ENCODE measurements at regions of chr17 and their contacts with region 1.

Region 1: DNA sequence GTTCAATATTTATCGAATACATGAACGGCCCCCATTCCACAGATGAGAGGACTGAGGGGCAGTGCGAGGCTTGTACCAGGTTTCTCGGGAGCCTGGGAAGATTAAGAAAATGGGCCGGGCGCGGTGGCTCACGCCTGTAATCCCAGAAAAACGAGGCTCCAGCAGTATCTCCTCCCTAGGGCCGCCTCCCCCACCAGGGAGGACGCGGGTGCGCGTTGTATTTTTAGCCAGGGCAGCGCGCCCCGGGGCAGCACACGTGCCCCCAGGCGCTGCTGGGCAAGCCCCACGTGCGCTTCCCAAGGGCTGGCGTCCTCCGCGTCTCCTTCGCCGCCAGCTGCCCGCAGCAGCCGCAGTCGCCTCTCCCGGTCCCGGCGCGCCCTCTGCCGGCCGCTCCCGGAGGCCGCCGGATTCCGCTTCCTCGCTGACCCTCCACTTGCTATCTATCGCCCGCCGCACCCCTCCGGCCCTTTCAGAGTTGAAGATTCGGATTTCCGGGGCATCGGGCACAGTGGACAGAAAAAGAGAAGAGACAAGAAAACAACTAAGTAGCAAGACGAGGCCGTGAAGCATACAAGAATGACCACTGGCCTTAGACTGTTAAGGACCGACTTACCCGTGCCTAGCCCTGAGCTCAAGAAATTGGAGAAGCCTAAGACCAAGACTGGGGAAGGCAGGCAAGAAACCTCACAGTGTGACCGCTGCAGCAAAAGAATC is 1.9 kb upstream of the YBX2 start:
- DNase-seq: peak; percentile 71
- H3K4me3 Mint-ChIP-seq: no peak overlapping the region
- H3K27ac Mint-ChIP-seq: peak overlapping the region; percentile 52
- H3K4me1 Mint-ChIP-seq: peaks cover 28% of the 10 kb centered on the region
- H3K27me3 Mint-ChIP-seq: peaks cover 91% of the 10 kb centered on the region

Region 2: DNA sequence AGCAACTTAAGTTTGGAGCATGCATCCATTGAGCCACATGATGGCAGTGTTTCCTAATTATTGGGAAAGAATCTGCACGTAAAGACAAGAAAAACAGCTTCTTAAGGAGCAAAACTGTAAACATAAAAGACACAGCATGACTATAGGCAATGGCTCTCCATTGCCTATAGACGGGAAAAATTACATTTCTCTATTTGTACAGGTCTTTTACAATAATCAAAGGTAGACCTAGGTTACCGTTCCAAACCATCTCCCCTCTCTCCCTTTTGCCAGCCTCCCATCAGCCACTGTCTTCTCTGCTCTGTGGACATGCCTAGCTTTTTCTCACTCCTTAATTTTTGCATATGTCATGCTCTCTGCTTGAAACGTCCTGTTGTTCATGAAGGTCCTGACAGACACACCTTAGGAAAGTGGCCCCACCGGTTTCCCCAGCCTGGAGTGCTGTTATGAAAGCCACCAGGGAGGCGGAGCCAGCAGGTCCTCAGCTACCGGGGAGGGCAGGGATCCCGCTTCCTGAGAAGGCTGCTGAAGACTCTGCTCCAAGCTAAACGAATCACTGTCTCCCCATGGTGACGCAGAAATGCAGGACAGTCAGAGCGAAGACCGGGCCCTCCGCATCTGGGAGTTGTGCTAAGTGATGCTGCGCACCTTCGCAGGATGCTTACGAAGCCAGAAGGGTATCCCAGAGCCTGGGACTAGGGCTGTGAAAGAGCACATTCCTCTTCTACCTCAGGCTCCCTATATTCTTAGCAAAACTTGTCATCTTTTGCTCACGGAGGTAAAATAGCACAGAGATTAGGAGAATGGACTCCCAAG is 250.2 kb before region 1 on chr17:
- CTCF ChIA-PET with region 1: interaction called, 12 read pairs
- DNase-seq: peak; percentile 64
- H3K4me3 Mint-ChIP-seq: peak overlapping the region; percentile 65
- H3K27ac Mint-ChIP-seq: peak overlapping the region; percentile 71
- H3K4me1 Mint-ChIP-seq: peaks cover 42% of the 10 kb centered on the region
- H3K27me3 Mint-ChIP-seq: peaks cover 60% of the 10 kb centered on the region

Region 3: DNA sequence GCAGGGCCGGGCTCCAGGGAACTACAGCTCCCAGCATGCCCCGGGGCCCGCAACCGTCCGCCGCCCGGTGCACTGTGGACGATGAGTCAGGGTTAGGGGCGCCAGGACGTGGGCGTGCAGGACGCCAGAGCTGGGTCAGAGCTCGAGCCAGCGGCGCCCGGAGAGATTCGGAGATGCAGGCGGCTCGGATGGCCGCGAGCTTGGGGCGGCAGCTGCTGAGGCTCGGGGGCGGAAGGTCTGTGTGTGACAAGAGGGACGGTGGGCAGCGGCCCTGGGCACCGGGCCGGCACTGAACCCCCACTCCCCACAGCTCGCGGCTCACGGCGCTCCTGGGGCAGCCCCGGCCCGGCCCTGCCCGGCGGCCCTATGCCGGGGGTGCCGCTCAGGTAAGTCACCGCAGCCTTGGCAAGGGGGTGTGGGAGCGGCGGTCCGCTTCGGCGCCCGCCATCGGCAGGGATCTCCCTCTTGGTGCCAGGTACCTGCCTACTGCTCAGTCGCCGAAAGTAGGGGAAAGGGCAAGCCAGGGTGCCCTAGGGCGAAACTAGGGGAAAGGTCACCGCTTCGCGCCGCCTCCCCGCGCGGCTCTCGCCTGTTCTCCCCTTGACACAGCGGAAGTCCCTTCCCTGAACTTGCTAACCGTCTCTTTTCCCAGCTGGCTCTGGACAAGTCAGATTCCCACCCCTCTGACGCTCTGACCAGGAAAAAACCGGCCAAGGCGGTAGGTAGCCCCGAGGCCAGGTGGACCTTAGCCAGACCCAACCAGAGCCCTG is 76.3 kb before region 1 on chr17 and contains the starts of genes ACADVL and DLG4:
- CTCF ChIA-PET with region 1: interaction called, 34 read pairs
- DNase-seq: peak; percentile 86
- H3K4me3 Mint-ChIP-seq: peak within 1 kb of the TSS; percentile 94
- H3K27ac Mint-ChIP-seq: peak within 1 kb of the TSS; percentile 90
- H3K4me1 Mint-ChIP-seq: peaks cover 62% of the 10 kb centered on the region
- H3K27me3 Mint-ChIP-seq: peaks cover 13% of the 10 kb centered on the region

Region 4: GRCh38 chr17:7280519-7281429 is 15.6 kb before region 1 on chr17:
- CTCF ChIA-PET with region 1: interaction called, 78 read pairs
- DNase-seq: peak; percentile 89
- H3K4me3 Mint-ChIP-seq: peak overlapping the region; percentile 71
- H3K27ac Mint-ChIP-seq: peak overlapping the region; percentile 45
- H3K4me1 Mint-ChIP-seq: peaks cover 28% of the 10 kb centered on the region
- H3K27me3 Mint-ChIP-seq: peaks cover 61% of the 10 kb centered on the region

Region 5: GRCh38 chr17:7308625-7309433 is 12.5 kb after region 1 on chr17:
- CTCF ChIA-PET with region 1: interaction called, 11 read pairs
- DNase-seq: peak; percentile 88
- H3K4me3 Mint-ChIP-seq: peak overlapping the region; percentile 96
- H3K27ac Mint-ChIP-seq: peak overlapping the region; percentile 100
- H3K4me1 Mint-ChIP-seq: peaks cover 61% of the 10 kb centered on the region
- H3K27me3 Mint-ChIP-seq: no peaks in the 10 kb centered on the region

Region 6: DNA sequence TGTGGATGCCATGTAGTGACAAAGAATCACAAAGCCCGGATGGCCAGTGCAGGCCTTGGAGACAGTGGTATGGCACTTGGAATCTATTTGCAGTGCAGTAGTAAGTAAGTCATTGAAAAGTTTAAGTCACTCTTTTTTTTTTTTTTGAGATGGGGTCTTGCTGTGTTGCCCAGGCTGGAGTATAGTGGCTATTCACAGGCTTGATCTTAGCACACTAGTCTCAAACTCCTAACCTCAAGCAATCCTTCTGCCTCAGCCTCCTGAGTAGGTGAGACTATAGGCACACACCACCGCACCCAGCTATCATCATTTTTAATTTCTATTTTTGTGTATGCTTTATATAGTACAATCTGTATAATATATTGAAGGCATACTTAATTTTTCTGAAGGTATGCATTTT is 102.3 kb after region 1 on chr17:
- CTCF ChIA-PET with region 1: no interaction called
- DNase-seq: no peak
- H3K4me3 Mint-ChIP-seq: no peak overlapping the region
- H3K27ac Mint-ChIP-seq: no peak overlapping the region
- H3K4me1 Mint-ChIP-seq: peaks cover 23% of the 10 kb centered on the region
- H3K27me3 Mint-ChIP-seq: peaks cover 7% of the 10 kb centered on the region

Region 7: GRCh38 chr17:7413346-7413985 is 117.1 kb after region 1 on chr17:
- CTCF ChIA-PET with region 1: no interaction called
- DNase-seq: no peak
- H3K4me3 Mint-ChIP-seq: no peak overlapping the region
- H3K27ac Mint-ChIP-seq: no peak overlapping the region
- H3K4me1 Mint-ChIP-seq: peaks cover 2% of the 10 kb centered on the region
- H3K27me3 Mint-ChIP-seq: peaks cover 31% of the 10 kb centered on the region

Measured in activated naive CD4-positive, alpha-beta T cell treated with anti-CD3 and anti-CD28 coated beads, Interleukin-2, amount 10 ng/mL, durations not matched to agents 7 days and 5 days (primary cell).